ENCODE measurements at regions of chr20 and their contacts with region 1.

Region 1: DNA sequence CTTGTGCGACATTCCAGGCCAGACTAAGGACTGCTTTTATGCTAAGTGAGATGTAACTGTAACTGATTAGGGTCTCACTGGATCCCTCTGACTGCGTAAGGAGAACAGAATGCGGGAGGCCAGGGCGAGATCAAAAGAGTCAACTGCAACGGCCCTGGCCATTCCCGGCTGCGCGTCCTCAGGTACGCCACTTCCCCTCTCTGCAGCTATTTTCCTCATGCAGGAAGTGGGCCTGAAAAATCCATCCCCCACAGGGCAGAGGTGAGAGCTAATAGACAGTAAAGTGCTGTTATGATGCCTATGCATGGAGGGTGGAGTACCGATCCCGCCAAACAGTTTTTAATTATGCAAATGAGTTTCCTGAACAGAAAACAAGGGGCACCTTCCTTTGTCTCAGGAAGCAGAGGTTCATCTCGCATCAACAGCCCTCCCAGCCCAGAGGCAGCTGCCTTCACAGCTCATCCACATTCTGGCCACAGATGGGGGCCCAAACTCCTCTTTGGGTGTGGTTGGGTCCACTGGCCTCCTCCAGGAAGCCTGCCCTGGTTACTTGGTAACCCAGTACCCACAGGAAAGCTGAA is 9.3 kb downstream of the PREX1 start:
- DNase-seq: peak in 7 of 9 experiments; percentile 39 to 80 (median 54)
- ATAC-seq: peak; percentile 74
- H3K4me3 ChIP-seq: peak overlapping the region; percentile 18 to 42
- H3K4me3 Mint-ChIP-seq: peak overlapping the region; percentile 96
- H3K27ac ChIP-seq: peak overlapping the region; percentile 57 to 84
- H3K27ac Mint-ChIP-seq: no peak overlapping the region
- H3K4me1 ChIP-seq: peaks cover 99% of the 10 kb centered on the region
- H3K4me1 Mint-ChIP-seq: peaks cover 76% of the 10 kb centered on the region
- H3K27me3 ChIP-seq: no peaks in the 10 kb centered on the region
- H3K27me3 Mint-ChIP-seq: no peaks in the 10 kb centered on the region
- CTCF ChIP-seq: no peak

Region 2: GRCh38 chr20:48574393-48574792 is 244.1 kb before region 1 on chr20:
- CTCF ChIA-PET with region 1: no interaction called
- POLR2A ChIA-PET with region 1: no interaction called
- intact Hi-C with region 1: no loop called
- DNase-seq: no peak
- ATAC-seq: no peak
- H3K4me3 ChIP-seq: no peak overlapping the region
- H3K4me3 Mint-ChIP-seq: no peak overlapping the region
- H3K27ac ChIP-seq: no peak overlapping the region
- H3K27ac Mint-ChIP-seq: no peak overlapping the region
- H3K4me1 ChIP-seq: no peaks in the 10 kb centered on the region
- H3K4me1 Mint-ChIP-seq: no peaks in the 10 kb centered on the region
- H3K27me3 ChIP-seq: no peaks in the 10 kb centered on the region
- H3K27me3 Mint-ChIP-seq: peaks cover 3% of the 10 kb centered on the region
- CTCF ChIP-seq: no peak

Region 3: GRCh38 chr20:48750947-48751635 is 67.4 kb before region 1 on chr20:
- CTCF ChIA-PET with region 1: interaction called, 5 read pairs
- POLR2A ChIA-PET with region 1: no interaction called
- intact Hi-C with region 1: loop called in 1 of 2 experiments (anchors 1 kb)
- DNase-seq: peak; percentile 16 to 81 (median 58)
- ATAC-seq: peak; percentile 78
- H3K4me3 ChIP-seq: peak overlapping the region; percentile 27 to 32
- H3K4me3 Mint-ChIP-seq: peak overlapping the region; percentile 56
- H3K27ac ChIP-seq: peak overlapping the region; percentile 12 to 68
- H3K27ac Mint-ChIP-seq: peak overlapping the region; percentile 88
- H3K4me1 ChIP-seq: peaks cover 67% of the 10 kb centered on the region
- H3K4me1 Mint-ChIP-seq: peaks cover 77% of the 10 kb centered on the region
- H3K27me3 ChIP-seq: no peaks in the 10 kb centered on the region
- H3K27me3 Mint-ChIP-seq: no peaks in the 10 kb centered on the region
- CTCF ChIP-seq: no peak

Region 4: DNA sequence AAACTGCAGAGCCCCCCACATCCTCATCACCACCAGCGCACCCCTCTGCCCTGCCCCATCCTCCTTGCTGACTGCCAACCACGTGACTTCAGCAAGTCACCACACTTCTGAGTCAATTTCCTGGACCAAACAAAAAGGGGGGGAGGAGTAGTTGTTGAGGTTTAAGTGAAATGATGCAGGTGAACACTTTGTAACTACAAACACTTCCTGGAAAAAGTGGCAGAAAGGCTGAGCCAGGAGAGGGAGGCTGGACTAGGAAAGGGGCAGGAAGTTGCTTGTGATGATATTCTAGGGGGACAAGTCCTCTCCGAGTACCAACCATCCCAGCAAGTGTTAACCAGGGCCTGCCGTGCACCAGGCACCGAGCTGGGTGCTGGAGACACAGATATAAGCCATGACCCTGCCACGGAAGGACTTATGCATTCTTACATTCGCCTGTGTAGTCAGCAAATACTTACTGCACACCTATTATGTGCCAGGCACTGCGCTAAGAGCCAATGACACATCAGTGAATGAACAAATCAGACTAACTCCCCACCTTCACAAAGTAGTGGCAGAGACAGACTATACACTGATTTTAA is 58.0 kb before region 1 on chr20:
- CTCF ChIA-PET with region 1: interaction called, 4 read pairs
- POLR2A ChIA-PET with region 1: interaction called, 4 read pairs
- intact Hi-C with region 1: loop called (anchors 2 kb)
- DNase-seq: peak; percentile 34 to 95 (median 82)
- ATAC-seq: peak; percentile 69
- H3K4me3 ChIP-seq: peak overlapping the region; percentile 36 to 51
- H3K4me3 Mint-ChIP-seq: peak overlapping the region; percentile 76
- H3K27ac ChIP-seq: peak overlapping the region; percentile 87 to 93
- H3K27ac Mint-ChIP-seq: peak overlapping the region; percentile 99
- H3K4me1 ChIP-seq: peaks cover 78% of the 10 kb centered on the region
- H3K4me1 Mint-ChIP-seq: peaks cover 86% of the 10 kb centered on the region
- H3K27me3 ChIP-seq: no peaks in the 10 kb centered on the region
- H3K27me3 Mint-ChIP-seq: no peaks in the 10 kb centered on the region
- CTCF ChIP-seq: no peak

Region 5: DNA sequence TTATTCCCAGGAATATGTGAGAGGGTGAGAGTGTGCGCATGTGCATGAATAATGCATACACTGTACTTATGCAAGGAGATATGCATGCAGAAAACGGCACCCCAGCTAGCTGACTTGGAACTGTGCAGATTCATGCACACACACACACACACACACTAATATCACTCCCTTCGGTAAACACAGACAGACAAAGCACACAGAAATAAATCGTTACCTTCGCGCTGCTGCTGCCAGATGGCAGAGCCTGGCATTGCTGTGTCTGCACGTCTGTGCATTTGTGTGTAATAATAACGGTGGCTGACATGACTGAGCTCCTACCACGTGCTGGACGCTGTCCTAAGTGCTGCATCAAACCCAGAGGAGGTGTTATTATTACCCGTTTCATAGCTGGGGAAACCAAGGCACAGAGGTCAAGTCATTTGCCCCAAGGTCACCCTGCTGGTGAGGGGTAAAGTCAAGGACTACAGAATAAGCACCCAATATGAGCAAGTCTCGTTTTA is 27.4 kb before region 1 on chr20:
- CTCF ChIA-PET with region 1: no interaction called
- POLR2A ChIA-PET with region 1: interaction called, 5 read pairs
- intact Hi-C with region 1: loop called in 1 of 2 experiments (anchors 1 kb)
- DNase-seq: peak in 4 of 9 experiments; percentile 23 to 50 (median 40)
- ATAC-seq: peak; percentile 66
- H3K4me3 ChIP-seq: no peak overlapping the region
- H3K4me3 Mint-ChIP-seq: peak overlapping the region; percentile 26
- H3K27ac ChIP-seq: no peak overlapping the region
- H3K27ac Mint-ChIP-seq: peak overlapping the region; percentile 19
- H3K4me1 ChIP-seq: peaks cover 65% of the 10 kb centered on the region
- H3K4me1 Mint-ChIP-seq: peaks cover 87% of the 10 kb centered on the region
- H3K27me3 ChIP-seq: no peaks in the 10 kb centered on the region
- H3K27me3 Mint-ChIP-seq: no peaks in the 10 kb centered on the region
- CTCF ChIP-seq: peak; percentile 43

Region 6: GRCh38 chr20:49132995-49133478 is 314.5 kb after region 1 on chr20:
- CTCF ChIA-PET with region 1: no interaction called
- POLR2A ChIA-PET with region 1: no interaction called
- intact Hi-C with region 1: no loop called
- DNase-seq: peak in 3 of 9 experiments; percentile 18 to 75 (median 65)
- ATAC-seq: peak; percentile 55
- H3K4me3 ChIP-seq: no peak overlapping the region
- H3K4me3 Mint-ChIP-seq: no peak overlapping the region
- H3K27ac ChIP-seq: no peak overlapping the region
- H3K27ac Mint-ChIP-seq: no peak overlapping the region
- H3K4me1 ChIP-seq: no peaks in the 10 kb centered on the region
- H3K4me1 Mint-ChIP-seq: peaks cover 5% of the 10 kb centered on the region
- H3K27me3 ChIP-seq: no peaks in the 10 kb centered on the region
- H3K27me3 Mint-ChIP-seq: no peaks in the 10 kb centered on the region
- CTCF ChIP-seq: peak; percentile 63